ENCODE measurements at regions of chr6 and their contacts with region 1.

Region 1: DNA sequence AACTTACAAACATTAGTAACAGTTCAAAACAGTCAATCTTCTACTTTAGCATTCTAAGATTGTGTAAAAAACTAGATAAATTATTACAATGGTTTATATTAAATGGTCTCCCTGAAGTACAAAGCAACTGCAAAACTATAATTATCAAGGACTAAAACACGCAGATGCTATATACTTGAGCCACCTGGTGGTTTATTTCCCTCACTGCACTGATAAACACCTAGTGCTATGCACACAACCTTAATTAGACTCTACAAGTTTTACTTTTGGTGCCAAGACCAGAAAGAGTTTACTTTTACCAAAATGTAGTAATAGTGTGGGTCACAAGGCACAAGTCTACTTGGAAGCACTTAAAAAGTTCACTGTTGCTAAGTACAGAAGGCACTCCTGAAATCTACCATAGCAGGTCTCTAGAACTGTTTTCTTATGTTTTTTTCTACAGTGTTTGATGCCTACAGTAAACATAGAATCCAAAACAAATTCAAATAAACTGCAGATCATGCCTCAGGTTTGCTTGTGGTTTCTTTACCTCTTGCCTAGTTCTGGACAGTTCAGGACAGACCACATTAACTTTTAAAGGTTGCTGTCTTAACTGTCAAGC is 49.2 kb downstream of the GMDS start:
- DNase-seq: peak in 1 of 5 donors; percentile 16
- ATAC-seq: peak in 3 of 4 donors; percentile 74 to 80 (median 77)
- H3K4me3 ChIP-seq: no peak overlapping the region
- H3K27ac ChIP-seq: no peak overlapping the region
- H3K4me1 ChIP-seq: peaks cover 0 to 21% (median 7%) of the 10 kb centered on the region in 12 donors
- H3K27me3 ChIP-seq: no peaks in the 10 kb centered on the region
- CTCF ChIP-seq: peak; percentile 69 to 90 (median 78)
- POLR2A ChIP-seq: no peak

Region 2: DNA sequence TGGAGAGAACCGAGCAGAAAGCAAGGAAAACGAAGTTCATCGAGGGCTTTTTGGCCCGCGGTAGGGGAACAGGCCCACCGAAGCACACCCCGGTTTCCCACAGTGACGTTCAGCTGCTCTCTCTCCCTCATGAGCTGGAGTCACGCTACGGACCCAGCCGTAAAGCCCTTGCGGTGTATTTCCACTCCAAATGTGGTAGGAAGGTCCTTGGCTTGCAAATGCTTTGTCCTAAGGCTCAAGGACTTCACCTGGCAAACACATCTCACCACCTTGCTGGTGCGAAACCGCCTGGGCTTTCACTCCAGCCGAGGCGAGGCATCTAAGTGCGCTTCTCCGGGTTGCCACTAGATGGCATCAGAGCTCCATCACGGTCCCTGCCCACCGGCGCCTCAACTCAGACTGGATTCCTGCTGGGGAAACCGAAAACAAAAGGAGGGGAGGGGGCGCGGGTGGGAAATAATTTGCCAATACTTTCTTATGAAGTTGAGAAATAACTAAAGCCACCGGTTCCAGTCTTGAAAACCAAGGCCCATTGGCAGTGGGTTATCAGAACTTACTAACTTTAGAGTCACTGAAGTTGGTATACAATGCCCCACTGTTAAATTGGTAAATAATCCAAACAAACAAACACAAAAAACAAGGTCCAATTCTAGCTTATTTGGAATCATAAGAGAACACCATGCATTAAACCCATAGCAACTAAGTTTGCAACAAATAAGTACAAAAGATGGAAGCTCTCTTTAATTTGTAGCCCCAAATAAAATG is 599.9 kb before region 1 on chr6:
- intact Hi-C with region 1: loop called in 7 of 10 experiments (anchors 1 to 2 kb)
- DNase-seq: peak in 4 of 5 donors; percentile 38 to 72 (median 52)
- ATAC-seq: peak; percentile 69 to 90 (median 82)
- H3K4me3 ChIP-seq: peak overlapping the region in 10 of 12 donors; percentile 1 to 44 (median 26)
- H3K27ac ChIP-seq: no peak overlapping the region
- H3K4me1 ChIP-seq: peaks cover 0 to 11% (median 6%) of the 10 kb centered on the region in 12 donors
- H3K27me3 ChIP-seq: peaks cover 8 to 47% (median 21%) of the 10 kb centered on the region in 9 donors
- CTCF ChIP-seq: peak; percentile 88 to 97 (median 94)
- POLR2A ChIP-seq: no peak

Region 3: DNA sequence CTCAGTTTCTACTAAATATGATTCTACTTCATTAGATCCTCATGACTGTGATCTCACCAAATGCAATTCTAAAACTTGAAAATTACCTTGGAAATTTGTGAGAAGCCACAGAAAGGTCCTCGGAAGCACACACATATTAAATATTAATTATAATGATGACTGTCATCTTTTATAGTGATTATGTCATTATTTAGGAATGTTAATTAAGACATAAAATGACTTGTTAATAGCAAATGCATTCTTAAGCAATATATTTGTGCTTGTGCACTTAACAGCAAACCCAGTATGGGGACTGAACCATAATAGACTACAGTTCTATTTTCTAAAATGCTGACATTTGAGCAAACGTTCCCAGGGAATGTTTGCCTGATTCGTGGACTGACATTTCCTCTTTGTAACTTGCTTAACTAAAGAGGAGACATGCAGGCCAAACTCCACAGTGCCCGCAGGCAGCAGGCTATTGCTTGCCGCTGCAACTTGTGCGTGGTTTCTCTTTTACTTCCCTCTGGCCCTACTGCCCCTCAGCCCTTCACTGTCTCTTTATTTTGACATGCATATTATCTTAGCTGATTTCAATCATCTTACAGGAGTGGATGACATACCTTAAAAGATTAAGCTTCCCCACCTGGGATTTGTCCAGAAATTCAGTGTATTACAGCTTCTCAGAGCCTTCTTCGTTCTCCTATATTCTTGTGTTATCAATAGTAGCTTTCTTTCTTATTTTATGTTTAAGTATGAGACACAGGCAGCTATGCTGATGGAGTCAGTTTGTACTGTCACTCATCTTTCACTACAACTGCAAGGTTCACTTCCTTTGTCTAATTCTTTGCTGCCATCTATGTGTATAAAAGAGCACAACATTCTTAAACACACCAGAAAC is 92.3 kb before region 1 on chr6:
- intact Hi-C with region 1: loop called in 5 of 10 experiments (anchors 5 to 10 kb)
- DNase-seq: no peak
- ATAC-seq: peak; percentile 61 to 81 (median 76)
- H3K4me3 ChIP-seq: peak overlapping the region in 6 of 12 donors; percentile 2 to 38 (median 15)
- H3K27ac ChIP-seq: peak overlapping the region in 1 of 12 donors; percentile 12
- H3K4me1 ChIP-seq: peaks cover 0 to 12% (median 1%) of the 10 kb centered on the region in 12 donors
- H3K27me3 ChIP-seq: no peaks in the 10 kb centered on the region
- CTCF ChIP-seq: peak; percentile 35 to 73 (median 60)
- POLR2A ChIP-seq: no peak

Region 4: GRCh38 chr6:2111162-2111677 is 85.0 kb before region 1 on chr6:
- intact Hi-C with region 1: loop called in 4 of 10 experiments (anchors 5 to 10 kb)
- DNase-seq: no peak
- ATAC-seq: peak in 3 of 4 donors; percentile 56 to 82 (median 66)
- H3K4me3 ChIP-seq: peak overlapping the region in 4 of 12 donors; percentile 1 to 23 (median 19)
- H3K27ac ChIP-seq: peak overlapping the region in 5 of 12 donors; percentile 12 to 74 (median 18)
- H3K4me1 ChIP-seq: peaks cover 0 to 18% (median 5%) of the 10 kb centered on the region in 12 donors
- H3K27me3 ChIP-seq: no peaks in the 10 kb centered on the region
- CTCF ChIP-seq: no peak
- POLR2A ChIP-seq: no peak

Region 5: DNA sequence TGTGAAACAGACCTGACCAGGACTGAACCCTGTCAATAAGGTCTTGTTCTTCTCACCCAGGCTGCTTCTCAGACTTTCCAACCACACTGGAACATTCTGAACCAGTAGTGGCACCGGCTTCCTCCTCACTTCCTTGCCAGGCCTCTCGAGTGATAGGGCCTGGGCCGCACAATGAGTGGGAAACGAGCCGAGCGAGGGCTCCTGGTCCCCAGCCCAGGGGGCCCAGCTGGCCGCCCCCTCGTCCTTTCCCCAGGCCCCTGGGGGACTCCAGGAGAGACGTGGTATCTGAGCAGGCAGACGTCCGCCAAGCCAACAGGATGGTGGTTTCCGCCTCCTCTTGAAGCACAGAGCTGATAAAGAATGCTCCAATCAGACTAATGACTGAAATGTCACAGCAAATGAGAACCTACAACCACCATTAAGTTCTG is 68.7 kb before region 1 on chr6:
- intact Hi-C with region 1: loop called in 1 of 10 experiments (anchors 10 kb)
- DNase-seq: peak; percentile 51 to 76 (median 61)
- ATAC-seq: peak; percentile 88 to 93 (median 92)
- H3K4me3 ChIP-seq: peak overlapping the region in 7 of 12 donors; percentile 19 to 39 (median 30)
- H3K27ac ChIP-seq: peak overlapping the region; percentile 28 to 76 (median 58)
- H3K4me1 ChIP-seq: peaks cover 0 to 27% (median 11%) of the 10 kb centered on the region in 12 donors
- H3K27me3 ChIP-seq: no peaks in the 10 kb centered on the region
- CTCF ChIP-seq: no peak
- POLR2A ChIP-seq: peak in 1 of 2 donors; percentile 18

Region 6: GRCh38 chr6:2296781-2297180 is 100.6 kb after region 1 on chr6:
- intact Hi-C with region 1: no loop called
- DNase-seq: no peak
- ATAC-seq: no peak
- H3K4me3 ChIP-seq: no peak overlapping the region
- H3K27ac ChIP-seq: no peak overlapping the region
- H3K4me1 ChIP-seq: no peaks in the 10 kb centered on the region
- H3K27me3 ChIP-seq: no peaks in the 10 kb centered on the region
- CTCF ChIP-seq: no peak
- POLR2A ChIP-seq: no peak

Region 7: DNA sequence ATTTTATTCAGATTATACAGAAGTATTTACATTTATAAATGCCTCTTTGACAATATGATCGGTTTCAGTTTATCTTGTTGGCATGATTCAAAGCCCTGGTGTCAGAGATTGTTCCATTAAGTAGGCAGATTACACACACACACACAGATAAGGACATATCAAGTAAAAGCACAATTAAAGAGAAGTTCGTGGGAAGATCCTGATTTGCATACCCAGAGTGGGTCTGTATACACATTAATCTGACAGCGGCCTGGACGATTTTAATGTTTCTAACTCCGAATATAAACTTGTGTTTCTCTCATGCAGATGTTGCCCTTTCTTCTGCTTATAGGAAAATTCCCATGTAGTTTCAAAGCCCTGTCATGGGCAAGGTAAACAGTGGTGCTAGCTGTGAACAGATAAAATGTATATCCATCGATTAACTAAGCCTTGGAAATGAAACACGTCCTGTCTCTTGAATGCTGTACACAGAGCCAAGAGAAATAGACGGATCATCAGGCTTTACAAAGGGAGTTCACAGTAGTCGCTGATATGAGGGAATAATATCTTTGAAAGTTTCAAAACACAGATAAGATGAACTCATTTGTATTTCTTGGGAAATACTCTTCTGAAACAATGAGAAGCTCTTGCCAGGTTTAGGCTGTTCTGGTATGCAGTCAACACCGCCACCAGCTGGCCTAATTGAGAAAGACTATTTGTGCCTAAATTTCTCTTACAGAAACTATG is 157.4 kb after region 1 on chr6:
- intact Hi-C with region 1: loop called in 5 of 10 experiments (anchors 5 to 10 kb)
- DNase-seq: peak in 4 of 5 donors; percentile 44 to 59 (median 49)
- ATAC-seq: peak in 3 of 4 donors; percentile 75 to 87 (median 84)
- H3K4me3 ChIP-seq: peak overlapping the region in 1 of 12 donors; percentile 17
- H3K27ac ChIP-seq: peak overlapping the region in 1 of 12 donors; percentile 30
- H3K4me1 ChIP-seq: peaks cover 0 to 11% (median 5%) of the 10 kb centered on the region in 12 donors
- H3K27me3 ChIP-seq: no peaks in the 10 kb centered on the region
- CTCF ChIP-seq: peak; percentile 64 to 89 (median 80)
- POLR2A ChIP-seq: no peak

Region 8: GRCh38 chr6:2695454-2696095 is 499.4 kb after region 1 on chr6:
- intact Hi-C with region 1: loop called in 1 of 10 experiments (anchors 10 kb)
- DNase-seq: no peak
- ATAC-seq: peak in 3 of 4 donors; percentile 49 to 61 (median 60)
- H3K4me3 ChIP-seq: no peak overlapping the region
- H3K27ac ChIP-seq: no peak overlapping the region
- H3K4me1 ChIP-seq: no peaks in the 10 kb centered on the region
- H3K27me3 ChIP-seq: no peaks in the 10 kb centered on the region
- CTCF ChIP-seq: peak in 11 of 12 donors; percentile 9 to 63 (median 44)
- POLR2A ChIP-seq: no peak

Region 9: DNA sequence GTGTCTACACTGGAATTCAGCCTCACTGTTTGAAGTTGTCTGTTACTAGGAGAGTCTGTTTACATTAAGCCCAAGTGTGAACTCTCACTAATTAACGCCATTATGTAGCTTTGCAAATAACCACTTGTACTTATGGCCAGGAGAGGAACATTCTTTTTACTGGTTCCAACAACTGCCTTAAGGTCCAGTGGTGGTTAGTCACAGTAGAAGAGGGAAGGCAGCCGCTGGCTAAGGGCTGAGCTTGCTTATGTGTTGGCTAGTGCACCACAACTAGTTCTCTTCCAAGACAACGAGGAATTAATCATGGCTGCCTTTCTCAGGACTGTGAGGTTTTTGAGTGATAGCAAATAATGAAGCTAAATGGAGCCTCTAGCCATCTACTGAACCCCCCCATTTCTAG is 1275.5 kb after region 1 on chr6:
- intact Hi-C with region 1: no loop called
- DNase-seq: no peak
- ATAC-seq: no peak
- H3K4me3 ChIP-seq: no peak overlapping the region
- H3K27ac ChIP-seq: no peak overlapping the region
- H3K4me1 ChIP-seq: peaks cover 0 to 12% (median 2%) of the 10 kb centered on the region in 12 donors
- H3K27me3 ChIP-seq: no peaks in the 10 kb centered on the region
- CTCF ChIP-seq: no peak
- POLR2A ChIP-seq: no peak